Endothelial cell of umbilical vein (primary cell): ENCODE measurements at regions of chr11 and their contacts with region 1.

Region 1: DNA sequence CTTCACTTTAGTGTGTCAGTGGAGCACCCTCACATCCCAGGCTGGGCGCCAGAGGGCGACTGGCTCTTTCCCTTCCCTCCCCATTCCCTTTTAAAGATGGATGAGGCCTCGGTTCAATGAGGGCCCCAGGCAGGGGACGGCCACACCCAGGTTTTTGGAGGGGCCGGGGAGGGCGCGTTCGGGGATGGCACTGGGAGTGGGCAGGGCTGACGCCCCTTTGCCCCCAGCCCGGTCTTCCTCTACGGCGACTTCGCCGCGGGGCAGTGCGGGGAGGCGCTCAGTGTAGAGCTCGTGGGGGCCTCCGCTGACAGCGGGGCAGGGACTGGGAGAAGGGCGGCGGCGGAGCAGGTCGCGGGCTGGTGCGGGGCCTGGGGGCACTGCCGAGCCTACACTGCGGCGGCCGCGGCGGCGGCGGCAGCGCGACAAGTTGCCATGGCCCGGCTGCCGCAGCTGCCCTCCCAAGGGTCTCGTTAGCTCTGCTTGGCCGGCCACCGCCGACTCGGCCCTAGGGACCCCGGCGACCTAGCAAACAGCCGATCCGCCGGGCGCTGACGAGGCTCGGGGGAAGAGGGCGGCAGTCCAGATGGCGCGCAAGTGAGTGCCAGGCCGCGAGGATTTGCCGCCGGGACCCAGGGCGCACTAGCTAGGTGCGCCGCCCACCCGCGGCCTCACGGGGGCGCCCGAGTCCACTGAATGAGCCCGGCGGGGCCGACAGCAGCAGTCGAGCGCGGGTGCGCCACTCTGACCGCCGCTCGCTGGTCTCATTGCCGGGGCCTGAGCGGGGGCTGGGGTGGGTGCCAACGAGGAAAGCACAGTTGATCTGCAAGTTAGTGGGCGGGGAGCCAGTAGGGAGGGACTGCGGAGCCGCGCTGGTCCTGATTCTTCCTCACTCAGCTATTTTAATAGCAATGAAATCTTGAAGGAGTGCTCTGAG is 92.7 kb downstream of the RRM1 start:
- DNase-seq: peak; percentile 83
- H3K4me3 ChIP-seq: peak overlapping the region; percentile 52 to 65 (median 59)
- H3K27ac ChIP-seq: peak overlapping the region; percentile 31
- H3K4me1 ChIP-seq: no peaks in the 10 kb centered on the region
- H3K27me3 ChIP-seq: peaks cover 0 to 3% of the 10 kb centered on the region in 2 experiments
- CTCF ChIP-seq: peak; percentile 83 to 95
- POLR2A ChIP-seq: no peak

Region 2: DNA sequence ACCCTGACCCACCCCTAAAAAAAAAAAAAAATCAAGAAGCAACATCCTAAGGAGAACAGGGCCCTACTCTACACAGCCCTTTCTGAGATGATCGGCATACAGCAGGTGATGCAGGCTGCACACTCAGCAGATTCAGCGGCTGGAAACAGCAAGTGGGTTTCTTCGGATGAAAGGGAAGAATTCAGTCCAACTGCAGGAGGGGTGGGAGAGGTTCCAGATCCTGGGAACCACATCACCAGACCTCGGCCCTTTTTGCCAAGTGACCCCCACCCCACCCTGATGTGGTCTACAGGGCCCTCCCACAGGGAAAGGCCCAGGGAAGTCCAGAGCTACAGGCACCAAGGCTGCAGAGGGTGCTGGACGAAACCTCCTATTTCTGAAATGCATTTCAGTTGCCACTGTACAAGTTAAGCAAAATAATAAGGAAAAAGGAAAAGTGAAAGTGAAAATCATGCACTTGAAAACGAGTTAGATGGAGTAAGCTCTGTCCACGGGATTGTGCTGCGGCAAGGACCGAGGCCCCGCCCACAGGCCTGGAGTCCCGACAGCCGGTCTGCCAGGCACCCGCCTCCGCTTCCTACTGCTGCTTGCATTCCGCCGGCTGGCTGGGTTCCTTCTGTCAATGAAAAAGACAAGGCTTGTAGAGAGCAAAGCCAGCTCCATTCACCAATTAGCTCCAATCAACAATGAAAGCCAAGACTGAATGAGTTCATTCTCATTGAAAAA is 1242.1 kb before region 1 on chr11:
- CTCF ChIA-PET with region 1: no interaction called
- POLR2A ChIA-PET with region 1: no interaction called
- dilution Hi-C with region 1: no loop called
- intact Hi-C with region 1: no loop called
- DNase-seq: peak; percentile 83
- H3K4me3 ChIP-seq: no peak overlapping the region
- H3K27ac ChIP-seq: no peak overlapping the region
- H3K4me1 ChIP-seq: peaks cover 11% of the 10 kb centered on the region
- H3K27me3 ChIP-seq: no peaks in the 10 kb centered on the region
- CTCF ChIP-seq: no peak
- POLR2A ChIP-seq: no peak

Region 3: DNA sequence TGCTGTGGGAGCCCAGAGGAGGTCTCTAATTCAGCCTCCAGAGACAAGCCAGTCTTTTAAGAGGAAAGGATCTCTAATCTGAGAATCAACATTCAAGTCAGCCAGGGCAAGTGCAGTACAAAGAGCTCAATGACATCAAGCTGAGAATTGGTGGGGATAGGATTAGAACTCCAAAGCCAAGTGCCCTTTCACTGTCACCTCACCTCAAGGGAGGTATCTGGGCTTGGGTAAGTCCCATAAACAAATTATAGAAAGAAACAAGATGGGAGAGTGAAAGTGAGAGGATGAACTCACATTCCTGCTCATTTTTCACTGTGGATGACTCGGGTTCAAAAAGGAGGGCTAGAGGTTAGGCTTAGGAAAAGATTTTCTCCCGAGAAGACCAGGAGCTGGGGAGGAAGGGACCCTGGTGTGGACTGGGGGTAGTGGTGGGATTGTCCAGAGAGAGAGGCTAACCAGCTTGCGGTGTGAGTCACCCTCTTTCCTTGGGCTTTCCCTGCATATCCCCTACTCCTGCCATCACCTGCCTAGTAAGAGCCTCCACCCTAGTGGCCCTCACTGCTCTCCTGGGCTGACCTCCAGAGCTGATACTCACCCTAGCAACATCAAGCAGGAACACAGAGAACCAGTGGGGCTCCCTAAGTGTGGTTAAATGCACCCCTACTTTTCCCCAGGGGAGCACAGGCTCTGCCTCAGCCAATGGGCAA is 22.3 kb before region 1 on chr11:
- CTCF ChIA-PET with region 1: interaction called, 12 read pairs
- POLR2A ChIA-PET with region 1: no interaction called
- dilution Hi-C with region 1: no loop called
- intact Hi-C with region 1: no loop called
- DNase-seq: no peak
- H3K4me3 ChIP-seq: no peak overlapping the region
- H3K27ac ChIP-seq: no peak overlapping the region
- H3K4me1 ChIP-seq: no peaks in the 10 kb centered on the region
- H3K27me3 ChIP-seq: peaks cover 0 to 8% of the 10 kb centered on the region in 2 experiments
- CTCF ChIP-seq: no peak
- POLR2A ChIP-seq: no peak

Region 4: DNA sequence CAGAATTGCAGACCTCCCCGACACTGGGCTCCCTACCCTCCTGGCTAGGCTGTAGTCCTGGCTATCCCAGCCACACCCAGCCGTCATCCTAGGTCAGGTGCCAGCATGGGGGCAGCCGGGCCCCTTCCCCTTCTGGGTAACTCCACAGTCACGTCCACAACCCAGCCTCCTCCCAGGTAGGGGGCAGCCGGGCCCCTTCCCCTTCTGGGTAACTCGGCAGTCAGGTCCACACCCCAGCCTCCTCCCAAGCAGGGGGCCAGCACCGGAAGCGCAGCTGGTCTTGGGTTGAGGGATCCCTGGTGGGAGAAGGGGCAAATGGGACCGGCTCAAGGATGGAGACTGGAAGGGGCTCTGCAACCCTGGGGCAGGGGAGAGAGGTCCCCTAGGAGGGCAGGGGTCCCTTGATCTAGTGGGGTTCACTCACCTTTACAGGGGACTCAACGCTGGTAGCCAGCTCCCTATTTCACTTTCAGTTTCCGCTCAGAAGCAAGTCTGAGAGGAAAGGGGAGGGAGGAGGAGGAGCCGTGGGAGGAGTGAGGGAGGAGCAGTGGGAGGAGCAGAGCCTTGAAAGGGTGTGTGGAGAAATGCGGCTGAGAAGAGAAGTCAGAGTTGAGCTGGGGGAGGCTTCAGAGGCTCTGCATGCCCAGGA is 206.0 kb after region 1 on chr11 and contains the start of gene TRIM21:
- CTCF ChIA-PET with region 1: interaction called, 7 read pairs
- POLR2A ChIA-PET with region 1: no interaction called
- dilution Hi-C with region 1: no loop called
- intact Hi-C with region 1: loop called (anchors 2 kb)
- DNase-seq: peak; percentile 84
- H3K4me3 ChIP-seq: peak within 1 kb of the TSS; percentile 58 to 85 (median 85)
- H3K27ac ChIP-seq: peak within 1 kb of the TSS; percentile 4
- H3K4me1 ChIP-seq: peaks cover 3% of the 10 kb centered on the region
- H3K27me3 ChIP-seq: no peaks in the 10 kb centered on the region
- CTCF ChIP-seq: no peak
- POLR2A ChIP-seq: peak; percentile 40
- total RNA-seq, gene TRIM21: 19.1 and 20.8 TPM in 2 replicates

Region 5: DNA sequence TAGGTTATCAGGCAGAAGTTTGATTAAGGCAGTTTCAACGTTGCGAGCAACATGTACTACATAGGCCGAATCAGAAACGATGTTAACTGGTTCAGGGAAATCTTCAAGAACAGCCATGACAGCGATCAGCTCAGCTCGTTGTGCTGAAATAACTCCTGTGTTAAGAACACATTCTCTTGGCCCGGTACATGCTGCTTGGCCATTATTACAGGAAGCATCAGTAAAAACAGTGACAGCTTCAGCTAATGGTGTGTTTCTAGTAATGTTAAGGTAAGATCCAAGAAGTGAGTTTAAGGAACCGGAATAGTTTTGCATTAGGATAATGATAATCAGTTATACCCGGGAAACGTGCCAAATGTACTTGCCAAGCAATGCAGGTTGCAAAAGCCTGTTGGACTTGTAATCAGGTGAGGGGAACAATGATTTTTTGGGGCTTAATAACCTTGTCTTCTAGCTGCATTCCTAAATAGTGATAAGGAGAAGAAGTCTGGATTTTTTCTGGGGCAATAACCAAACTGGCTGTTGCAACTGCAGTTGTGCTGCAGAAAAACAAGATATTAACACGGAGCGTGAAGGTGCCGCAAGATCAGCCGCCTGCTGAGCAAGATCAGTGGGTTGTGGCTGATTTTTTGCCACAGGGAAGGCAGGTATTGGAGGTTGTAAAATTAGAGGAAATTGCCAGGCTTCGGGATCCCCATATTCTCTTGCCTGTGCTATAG is 309.4 kb after region 1 on chr11:
- CTCF ChIA-PET with region 1: interaction called, 255 read pairs
- POLR2A ChIA-PET with region 1: no interaction called
- dilution Hi-C with region 1: no loop called
- intact Hi-C with region 1: loop called (anchors 1 kb)
- DNase-seq: no peak
- H3K4me3 ChIP-seq: no peak overlapping the region
- H3K27ac ChIP-seq: no peak overlapping the region
- H3K4me1 ChIP-seq: no peaks in the 10 kb centered on the region
- H3K27me3 ChIP-seq: peaks cover 18 to 23% of the 10 kb centered on the region in 2 experiments
- CTCF ChIP-seq: no peak
- POLR2A ChIP-seq: no peak

Region 6: DNA sequence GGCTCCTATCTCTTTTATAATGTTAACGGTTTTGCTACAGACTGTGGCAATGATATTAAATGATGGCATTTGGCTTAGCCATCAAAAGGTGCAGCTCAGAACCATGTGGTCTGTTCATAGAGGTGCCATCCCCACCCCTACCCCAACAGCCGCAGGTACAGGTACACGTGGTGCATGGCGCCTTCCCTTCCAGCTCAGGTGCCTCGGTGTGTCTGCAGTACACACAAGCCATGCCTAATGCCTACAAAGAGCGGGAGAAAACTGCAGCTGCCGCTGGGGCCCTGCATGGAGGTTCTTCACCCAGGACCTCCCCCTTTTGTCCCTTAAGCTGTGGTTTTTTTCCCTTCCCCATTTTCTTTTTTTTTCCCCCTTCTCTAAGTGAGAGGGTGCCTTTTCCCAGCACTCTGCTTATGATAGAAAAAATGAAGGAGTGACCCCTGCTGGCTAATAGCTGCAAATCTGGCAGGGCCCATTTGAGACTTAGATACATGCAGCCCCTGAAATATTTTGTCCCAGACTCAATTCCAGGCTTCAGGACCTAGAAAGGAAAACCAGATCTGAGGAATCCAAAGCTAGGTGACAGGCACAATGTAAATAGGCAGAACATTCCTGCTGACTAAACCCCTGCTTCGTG is 364.1 kb after region 1 on chr11:
- CTCF ChIA-PET with region 1: interaction called, 90 read pairs
- POLR2A ChIA-PET with region 1: no interaction called
- dilution Hi-C with region 1: no loop called
- intact Hi-C with region 1: loop called (anchors 1 kb)
- DNase-seq: peak; percentile 14
- H3K4me3 ChIP-seq: no peak overlapping the region
- H3K27ac ChIP-seq: no peak overlapping the region
- H3K4me1 ChIP-seq: no peaks in the 10 kb centered on the region
- H3K27me3 ChIP-seq: no peaks in the 10 kb centered on the region
- CTCF ChIP-seq: peak; percentile 32 to 40
- POLR2A ChIP-seq: no peak

Region 7: GRCh38 chr11:4636962-4637661 is 449.8 kb after region 1 on chr11 and contains the start of gene OR51D1:
- CTCF ChIA-PET with region 1: interaction called, 29 read pairs
- POLR2A ChIA-PET with region 1: no interaction called
- dilution Hi-C with region 1: no loop called
- intact Hi-C with region 1: loop called (anchors 1 kb)
- DNase-seq: peak; percentile 66
- H3K4me3 ChIP-seq: no peak within 1 kb of the TSS
- H3K27ac ChIP-seq: no peak within 1 kb of the TSS
- H3K4me1 ChIP-seq: no peaks in the 10 kb centered on the region
- H3K27me3 ChIP-seq: peaks cover 0 to 1% of the 10 kb centered on the region in 2 experiments
- CTCF ChIP-seq: peak; percentile 82 to 93
- POLR2A ChIP-seq: no peak
- total RNA-seq, gene OR51D1: not detected in 2 replicates

Region 8: DNA sequence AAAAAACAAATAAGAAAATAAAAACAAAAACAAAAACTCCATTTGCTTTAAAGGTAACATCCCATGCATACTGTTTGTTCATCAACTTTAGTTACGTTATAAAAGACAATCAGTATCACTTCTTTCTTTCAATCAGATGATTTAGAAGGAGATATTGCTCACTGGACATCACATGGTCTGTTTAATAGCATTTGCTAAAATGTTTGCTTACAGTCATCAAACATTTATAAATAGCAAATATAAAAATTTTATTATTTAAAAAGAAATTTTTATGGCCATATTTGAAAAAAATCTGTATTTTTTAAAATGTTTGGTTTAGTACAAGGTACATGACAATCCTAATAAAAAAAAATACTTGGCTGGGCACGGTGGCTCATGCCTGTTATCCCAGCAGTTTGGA is 539.8 kb after region 1 on chr11:
- CTCF ChIA-PET with region 1: no interaction called
- POLR2A ChIA-PET with region 1: no interaction called
- dilution Hi-C with region 1: no loop called
- intact Hi-C with region 1: no loop called
- DNase-seq: no peak
- H3K4me3 ChIP-seq: no peak overlapping the region
- H3K27ac ChIP-seq: no peak overlapping the region
- H3K4me1 ChIP-seq: no peaks in the 10 kb centered on the region
- H3K27me3 ChIP-seq: no peaks in the 10 kb centered on the region
- CTCF ChIP-seq: no peak
- POLR2A ChIP-seq: no peak

Region 9: GRCh38 chr11:5380740-5381342 is 1193.5 kb after region 1 on chr11:
- CTCF ChIA-PET with region 1: interaction called, 6 read pairs
- POLR2A ChIA-PET with region 1: no interaction called
- dilution Hi-C with region 1: no loop called
- intact Hi-C with region 1: loop called (anchors 5 kb)
- DNase-seq: peak; percentile 69
- H3K4me3 ChIP-seq: no peak overlapping the region
- H3K27ac ChIP-seq: no peak overlapping the region
- H3K4me1 ChIP-seq: no peaks in the 10 kb centered on the region
- H3K27me3 ChIP-seq: peaks cover 0 to 2% of the 10 kb centered on the region in 2 experiments
- CTCF ChIP-seq: peak; percentile 67 to 84
- POLR2A ChIP-seq: no peak